B cell (primary cell): ENCODE measurements at regions of chr20 and their contacts with region 1.

Region 1: GRCh38 chr20:32040142-32041022 is 11.7 kb upstream of the HCK start:
- DNase-seq: peak; percentile 89
- ATAC-seq: peak; percentile 91
- H3K4me3 ChIP-seq: peak overlapping the region; percentile 18 to 54 (median 37)
- H3K4me3 Mint-ChIP-seq: peak overlapping the region; percentile 70
- H3K27ac ChIP-seq: peak overlapping the region; percentile 38 to 66
- H3K27ac Mint-ChIP-seq: peak overlapping the region; percentile 80
- H3K4me1 ChIP-seq: peaks cover 21 to 50% of the 10 kb centered on the region in 2 donors
- H3K4me1 Mint-ChIP-seq: peaks cover 54% of the 10 kb centered on the region
- H3K27me3 ChIP-seq: no peaks in the 10 kb centered on the region
- H3K27me3 Mint-ChIP-seq: no peaks in the 10 kb centered on the region
- CTCF ChIP-seq: no peak

Region 2: GRCh38 chr20:31861346-31862156 is 178.8 kb before region 1 on chr20:
- CTCF ChIA-PET with region 1: interaction called, 139 read pairs
- POLR2A ChIA-PET with region 1: interaction called, 3 read pairs
- intact Hi-C with region 1: loop called (anchors 1 kb)
- DNase-seq: peak; percentile 81
- ATAC-seq: peak; percentile 83
- H3K4me3 ChIP-seq: peak overlapping the region in 4 of 5 experiments; percentile 42 to 61 (median 54)
- H3K4me3 Mint-ChIP-seq: peak overlapping the region; percentile 75
- H3K27ac ChIP-seq: no peak overlapping the region
- H3K27ac Mint-ChIP-seq: peak overlapping the region; percentile 53
- H3K4me1 ChIP-seq: peaks cover 19 to 26% of the 10 kb centered on the region in 2 donors
- H3K4me1 Mint-ChIP-seq: peaks cover 29% of the 10 kb centered on the region
- H3K27me3 ChIP-seq: peaks cover 0 to 18% (median 10%) of the 10 kb centered on the region in 4 experiments
- H3K27me3 Mint-ChIP-seq: peaks cover 5% of the 10 kb centered on the region
- CTCF ChIP-seq: no peak

Region 3: DNA sequence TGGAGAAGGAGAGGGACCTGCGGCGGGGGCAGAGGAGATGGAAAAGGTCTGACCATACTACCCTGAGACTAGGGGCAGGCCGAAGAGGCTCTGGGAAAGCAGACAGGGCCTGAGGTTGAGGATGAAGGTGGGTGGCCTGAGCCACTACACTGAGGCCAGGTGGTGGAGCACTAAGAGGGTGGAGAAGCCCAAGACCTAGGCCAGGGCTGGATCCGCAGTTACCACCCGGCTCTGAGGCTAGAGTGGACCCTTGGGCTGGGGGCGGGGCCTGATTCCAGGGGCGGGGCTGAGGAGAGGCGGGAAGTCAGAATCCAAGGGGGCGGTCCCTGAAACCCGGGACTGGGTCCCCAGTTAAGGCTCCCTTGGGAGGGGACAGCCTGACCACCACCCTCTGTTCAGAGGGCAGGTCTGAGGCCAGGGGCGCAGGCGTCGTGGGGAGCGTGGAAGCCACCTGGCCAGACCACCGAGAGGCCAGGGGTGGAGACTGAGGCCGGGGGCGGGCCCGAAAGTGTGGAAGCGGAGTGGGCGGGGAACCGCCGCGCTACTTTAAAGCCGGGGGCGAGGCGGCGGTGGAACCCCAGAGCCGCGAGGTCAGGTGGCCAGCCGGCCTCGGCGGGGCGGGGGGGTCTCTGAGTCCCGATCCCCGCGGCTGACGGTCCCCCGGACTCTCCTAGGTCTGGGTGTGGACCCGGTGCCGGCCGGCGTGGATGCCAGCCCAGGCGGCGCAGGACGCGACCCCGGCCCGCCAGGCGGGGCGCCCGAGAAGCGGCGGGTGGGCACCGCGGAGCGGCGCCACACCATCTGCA is 21.9 kb before region 1 on chr20:
- CTCF ChIA-PET with region 1: interaction called, 8 read pairs
- POLR2A ChIA-PET with region 1: no interaction called
- intact Hi-C with region 1: loop called (anchors 1 kb)
- DNase-seq: peak; percentile 60
- ATAC-seq: peak; percentile 61
- H3K4me3 ChIP-seq: peak overlapping the region in 4 of 5 experiments; percentile 41 to 69 (median 56)
- H3K4me3 Mint-ChIP-seq: peak overlapping the region; percentile 84
- H3K27ac ChIP-seq: no peak overlapping the region
- H3K27ac Mint-ChIP-seq: no peak overlapping the region
- H3K4me1 ChIP-seq: peaks cover 15 to 17% of the 10 kb centered on the region in 2 donors
- H3K4me1 Mint-ChIP-seq: peaks cover 22% of the 10 kb centered on the region
- H3K27me3 ChIP-seq: peaks cover 0 to 64% (median 30%) of the 10 kb centered on the region in 4 experiments
- H3K27me3 Mint-ChIP-seq: peaks cover 75% of the 10 kb centered on the region
- CTCF ChIP-seq: no peak

Region 4: GRCh38 chr20:32052090-32052777 is 11.9 kb after region 1 on chr20 and contains the start of gene HCK:
- CTCF ChIA-PET with region 1: interaction called, 26 read pairs
- POLR2A ChIA-PET with region 1: interaction called, 25 read pairs
- intact Hi-C with region 1: loop called (anchors 1 kb)
- DNase-seq: peak; percentile 54
- ATAC-seq: peak; percentile 44
- H3K4me3 ChIP-seq: peak within 1 kb of the TSS; percentile 35 to 93 (median 77)
- H3K4me3 Mint-ChIP-seq: peak within 1 kb of the TSS; percentile 90
- H3K27ac ChIP-seq: peak within 1 kb of the TSS; percentile 76 to 82
- H3K27ac Mint-ChIP-seq: peak within 1 kb of the TSS; percentile 90
- H3K4me1 ChIP-seq: peaks cover 33 to 55% of the 10 kb centered on the region in 2 donors
- H3K4me1 Mint-ChIP-seq: peaks cover 45% of the 10 kb centered on the region
- H3K27me3 ChIP-seq: peaks cover 0 to 3% (median 0%) of the 10 kb centered on the region in 4 experiments
- H3K27me3 Mint-ChIP-seq: no peaks in the 10 kb centered on the region
- CTCF ChIP-seq: no peak
- total RNA-seq, gene HCK: 48.1 and 48.6 TPM in 2 replicates

Region 5: DNA sequence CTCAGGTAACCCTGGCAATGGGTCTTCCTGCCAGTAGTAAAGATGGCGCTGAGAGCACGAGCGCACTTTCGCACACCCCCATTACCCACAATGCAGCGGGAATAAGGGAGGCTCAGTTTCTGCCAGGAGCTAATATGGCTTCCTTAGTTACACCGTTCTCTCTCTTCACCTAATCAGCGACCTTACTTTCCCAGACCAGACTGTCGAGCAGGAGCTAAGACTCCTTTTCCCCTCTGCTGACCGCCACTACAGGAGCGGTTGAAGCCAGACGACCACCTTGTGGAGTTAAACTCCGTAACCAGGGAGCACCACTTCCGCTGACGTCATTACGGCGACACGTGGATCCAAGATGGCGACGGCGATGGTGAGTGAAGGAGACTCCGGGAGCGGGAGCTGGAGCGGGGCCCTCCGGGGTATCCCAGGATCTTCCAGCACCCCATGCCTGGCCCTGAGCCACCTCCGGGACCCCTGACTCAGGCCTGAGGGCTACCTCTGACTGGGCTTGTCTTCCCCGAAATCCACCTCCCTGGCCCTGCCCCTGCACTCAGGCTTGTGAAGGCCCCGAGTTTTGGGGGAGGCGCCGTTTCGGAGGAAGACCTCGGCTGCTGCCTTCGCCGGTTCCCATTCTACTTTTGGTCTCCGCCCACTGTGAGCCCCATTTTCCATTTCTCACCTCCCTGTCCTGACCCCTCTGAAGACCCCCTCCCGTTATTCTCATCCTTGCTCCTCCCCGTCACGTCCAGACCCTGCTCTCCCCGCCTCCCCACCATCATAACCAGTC is 69.2 kb after region 1 on chr20 and contains the start of gene TM9SF4:
- CTCF ChIA-PET with region 1: interaction called, 18 read pairs
- POLR2A ChIA-PET with region 1: no interaction called
- intact Hi-C with region 1: loop called (anchors 1 kb)
- DNase-seq: peak; percentile 97
- ATAC-seq: peak; percentile 90
- H3K4me3 ChIP-seq: peak within 1 kb of the TSS; percentile 87 to 96 (median 95)
- H3K4me3 Mint-ChIP-seq: peak within 1 kb of the TSS; percentile 99
- H3K27ac ChIP-seq: peak within 1 kb of the TSS; percentile 99
- H3K27ac Mint-ChIP-seq: peak within 1 kb of the TSS; percentile 99
- H3K4me1 ChIP-seq: peaks cover 8 to 9% of the 10 kb centered on the region in 2 donors
- H3K4me1 Mint-ChIP-seq: peaks cover 36% of the 10 kb centered on the region
- H3K27me3 ChIP-seq: no peaks in the 10 kb centered on the region
- H3K27me3 Mint-ChIP-seq: no peaks in the 10 kb centered on the region
- CTCF ChIP-seq: no peak
- total RNA-seq, gene TM9SF4: 50.4 and 53.8 TPM in 2 replicates

Region 6: GRCh38 chr20:32207626-32208498 is 167.5 kb after region 1 on chr20 and contains the starts of genes PLAGL2 and POFUT1:
- CTCF ChIA-PET with region 1: no interaction called
- POLR2A ChIA-PET with region 1: no interaction called
- intact Hi-C with region 1: loop called (anchors 10 kb)
- DNase-seq: peak; percentile 91
- ATAC-seq: peak; percentile 98
- H3K4me3 ChIP-seq: peak within 1 kb of the TSS; percentile 78 to 99 (median 98)
- H3K4me3 Mint-ChIP-seq: peak within 1 kb of the TSS; percentile 96
- H3K27ac ChIP-seq: peak within 1 kb of the TSS; percentile 48 to 86
- H3K27ac Mint-ChIP-seq: peak within 1 kb of the TSS; percentile 93
- H3K4me1 ChIP-seq: peaks cover 35 to 39% of the 10 kb centered on the region in 2 donors
- H3K4me1 Mint-ChIP-seq: peaks cover 68% of the 10 kb centered on the region
- H3K27me3 ChIP-seq: no peaks in the 10 kb centered on the region
- H3K27me3 Mint-ChIP-seq: no peaks in the 10 kb centered on the region
- CTCF ChIP-seq: no peak
- total RNA-seq, gene PLAGL2: 18.2 and 18.4 TPM in 2 replicates
- total RNA-seq, gene POFUT1: 18.1 and 19.3 TPM in 2 replicates